ENCODE measurements at regions of chr3 and their contacts with region 1.

Region 1: DNA sequence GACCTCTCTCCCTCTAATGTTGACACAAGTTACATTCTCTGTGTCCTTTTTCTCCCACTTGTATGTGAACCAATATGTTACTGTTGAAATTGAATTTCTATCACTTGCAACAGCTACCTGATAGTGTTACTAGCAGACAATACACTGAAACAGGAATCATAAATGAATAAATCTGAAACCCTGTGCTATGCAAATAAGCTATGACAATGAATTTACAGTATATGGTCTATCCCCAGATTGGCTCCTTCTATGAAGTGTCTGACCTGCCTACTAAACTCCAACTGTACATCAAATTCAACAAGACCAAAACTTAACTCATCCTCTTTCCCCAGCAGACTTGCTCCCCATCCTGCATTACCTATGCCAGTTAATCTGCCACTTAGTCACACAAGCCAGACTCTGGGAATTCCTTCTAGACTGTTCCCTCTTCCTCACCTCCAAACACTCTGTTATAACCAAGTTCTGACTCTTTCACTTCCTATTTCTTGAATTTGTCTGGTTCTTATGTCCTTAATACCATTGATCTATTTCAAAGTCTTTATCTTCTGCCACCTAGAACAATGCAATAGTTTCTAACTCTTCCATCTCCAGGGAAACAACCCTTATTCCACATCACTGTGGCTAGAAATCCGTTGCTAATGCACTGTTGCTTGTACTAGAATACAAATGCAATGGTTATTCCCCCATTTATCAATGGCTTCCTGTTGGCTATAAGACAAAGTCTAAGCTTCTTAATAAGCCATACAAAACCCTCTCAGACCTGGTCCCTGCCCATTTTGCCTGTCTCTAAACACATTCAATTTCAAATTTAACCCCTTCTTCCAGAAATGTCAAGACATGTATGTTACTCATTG is 13.4 kb upstream of the ZNF639 start:
- DNase-seq: peak; percentile 63
- ATAC-seq: peak; percentile 86
- H3K4me3 ChIP-seq: peak overlapping the region in 2 of 5 experiments; percentile 3 to 5
- H3K4me3 Mint-ChIP-seq: no peak overlapping the region
- H3K27ac ChIP-seq: peak overlapping the region in 1 of 2 donors; percentile 11
- H3K27ac Mint-ChIP-seq: no peak overlapping the region
- H3K4me1 ChIP-seq: peaks cover 15 to 17% of the 10 kb centered on the region in 2 donors
- H3K4me1 Mint-ChIP-seq: peaks cover 6% of the 10 kb centered on the region
- H3K27me3 ChIP-seq: no peaks in the 10 kb centered on the region
- H3K27me3 Mint-ChIP-seq: no peaks in the 10 kb centered on the region
- CTCF ChIP-seq: no peak

Region 2: DNA sequence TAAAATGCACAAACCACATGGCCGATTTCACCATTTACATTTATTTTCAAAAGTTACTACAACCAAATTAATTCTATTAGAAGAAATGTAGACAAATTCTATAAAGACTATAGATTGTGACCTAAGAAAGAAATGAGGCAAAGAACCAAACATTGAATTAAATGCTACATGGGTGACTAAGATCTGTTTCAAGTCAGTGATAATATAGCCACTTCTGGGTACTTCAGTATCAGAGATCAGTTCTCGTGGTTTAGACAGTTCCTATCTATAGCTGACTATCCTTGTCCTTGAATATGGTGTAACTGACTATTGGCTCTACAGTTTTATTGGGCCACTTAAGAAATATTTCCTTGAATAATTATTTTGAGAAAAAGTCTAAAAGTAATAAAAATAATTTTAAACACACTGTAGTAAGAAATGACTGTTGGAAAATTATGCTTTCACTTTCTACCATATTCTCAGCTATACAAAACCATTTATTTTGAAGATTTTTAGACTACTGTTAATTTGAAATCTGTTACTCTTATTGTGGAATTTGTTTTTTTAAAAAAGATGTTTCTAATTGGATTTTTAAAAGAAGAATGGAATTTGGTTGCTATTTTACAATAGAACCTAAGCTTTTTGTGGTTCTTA is 72.7 kb before region 1 on chr3:
- CTCF ChIA-PET with region 1: no interaction called
- POLR2A ChIA-PET with region 1: no interaction called
- intact Hi-C with region 1: loop called (anchors 10 kb)
- DNase-seq: no peak
- ATAC-seq: no peak
- H3K4me3 ChIP-seq: no peak overlapping the region
- H3K4me3 Mint-ChIP-seq: no peak overlapping the region
- H3K27ac ChIP-seq: no peak overlapping the region
- H3K27ac Mint-ChIP-seq: no peak overlapping the region
- H3K4me1 ChIP-seq: no peaks in the 10 kb centered on the region
- H3K4me1 Mint-ChIP-seq: peaks cover 5% of the 10 kb centered on the region
- H3K27me3 ChIP-seq: no peaks in the 10 kb centered on the region
- H3K27me3 Mint-ChIP-seq: no peaks in the 10 kb centered on the region
- CTCF ChIP-seq: no peak

Region 3: GRCh38 chr3:179260949-179261765 is 48.3 kb before region 1 on chr3:
- CTCF ChIA-PET with region 1: interaction called, 6 read pairs
- POLR2A ChIA-PET with region 1: no interaction called
- intact Hi-C with region 1: loop called (anchors 5 kb)
- DNase-seq: peak; percentile 78
- ATAC-seq: peak; percentile 92
- H3K4me3 ChIP-seq: peak overlapping the region; percentile 48 to 77 (median 67)
- H3K4me3 Mint-ChIP-seq: peak overlapping the region; percentile 89
- H3K27ac ChIP-seq: peak overlapping the region in 1 of 2 donors; percentile 66
- H3K27ac Mint-ChIP-seq: peak overlapping the region; percentile 84
- H3K4me1 ChIP-seq: peaks cover 15 to 23% of the 10 kb centered on the region in 2 donors
- H3K4me1 Mint-ChIP-seq: peaks cover 52% of the 10 kb centered on the region
- H3K27me3 ChIP-seq: no peaks in the 10 kb centered on the region
- H3K27me3 Mint-ChIP-seq: no peaks in the 10 kb centered on the region
- CTCF ChIP-seq: no peak

Measured in B cell (primary cell).